Breast epithelium (tissue), 4 donors: ENCODE measurements at regions of chr2 and their contacts with region 1.

Region 1: DNA sequence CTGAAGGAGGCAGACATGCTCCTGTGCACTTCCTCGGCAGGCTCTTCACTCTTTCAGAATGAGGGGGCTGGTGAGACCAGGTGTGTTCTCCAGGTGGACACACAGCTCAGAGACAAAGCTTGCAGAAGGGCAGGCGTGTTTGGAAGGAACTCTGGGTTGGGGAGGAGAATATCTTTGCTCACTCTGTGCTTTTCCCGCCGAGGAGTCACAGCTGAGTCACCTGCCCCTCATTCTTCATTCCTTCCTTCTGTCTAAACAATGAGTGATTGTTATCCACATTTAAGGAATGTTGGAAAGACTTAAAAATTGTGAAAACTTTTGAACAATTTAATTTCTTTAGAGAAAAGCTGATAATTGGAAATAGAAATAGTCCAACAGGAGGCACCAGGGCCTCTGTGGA is 126.3 kb upstream of the TPO start:
- DNase-seq: no peak
- H3K4me3 ChIP-seq: no peak overlapping the region
- H3K27ac ChIP-seq: no peak overlapping the region
- H3K4me1 ChIP-seq: no peaks in the 10 kb centered on the region
- H3K27me3 ChIP-seq: no peaks in the 10 kb centered on the region
- CTCF ChIP-seq: no peak
- POLR2A ChIP-seq: no peak

Region 2: GRCh38 chr2:1192121-1192520 is 94.8 kb before region 1 on chr2:
- intact Hi-C with region 1: no loop called
- DNase-seq: no peak
- H3K4me3 ChIP-seq: no peak overlapping the region
- H3K27ac ChIP-seq: no peak overlapping the region
- H3K4me1 ChIP-seq: no peaks in the 10 kb centered on the region
- H3K27me3 ChIP-seq: no peaks in the 10 kb centered on the region
- CTCF ChIP-seq: no peak
- POLR2A ChIP-seq: no peak

Region 3: GRCh38 chr2:1272835-1273234 is 14.1 kb before region 1 on chr2:
- intact Hi-C with region 1: no loop called
- DNase-seq: no peak
- H3K4me3 ChIP-seq: no peak overlapping the region
- H3K27ac ChIP-seq: no peak overlapping the region
- H3K4me1 ChIP-seq: no peaks in the 10 kb centered on the region
- H3K27me3 ChIP-seq: peaks cover 0 to 7% of the 10 kb centered on the region in 2 donors
- CTCF ChIP-seq: no peak
- POLR2A ChIP-seq: no peak

Region 4: DNA sequence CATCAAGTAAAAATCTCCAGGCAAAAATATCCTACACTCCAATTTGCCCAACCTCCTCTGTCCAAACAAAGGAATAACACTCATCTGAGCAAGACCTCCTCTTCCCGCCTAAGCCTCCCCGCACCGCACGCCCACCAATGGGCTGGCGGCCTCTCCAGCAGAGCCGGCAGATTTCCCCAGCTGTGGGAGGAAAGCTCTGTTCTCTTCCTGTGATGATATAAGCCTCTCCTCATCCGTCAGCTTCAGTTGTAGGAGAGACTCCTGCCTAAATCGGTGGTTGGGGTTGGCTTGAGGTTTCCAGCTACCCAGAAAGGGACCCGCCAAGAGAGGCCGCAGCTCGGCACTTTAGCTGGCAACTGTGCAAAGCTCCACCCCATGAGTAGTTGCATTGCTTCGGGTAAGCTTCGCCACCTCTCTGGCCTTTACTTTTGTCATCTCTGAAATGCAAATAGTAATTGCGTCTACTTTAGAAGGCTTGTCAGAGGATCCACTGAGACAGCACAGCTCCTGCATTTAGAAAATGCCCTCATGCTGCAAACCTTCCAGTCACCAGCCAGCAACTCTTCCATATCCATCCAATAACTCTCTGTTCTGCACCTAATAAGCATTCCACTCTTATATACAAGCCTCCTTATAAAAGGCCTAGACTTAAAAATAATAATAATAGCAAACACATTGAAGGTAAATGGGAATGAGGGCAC is 897.8 kb after region 1 on chr2:
- intact Hi-C with region 1: loop called (anchors 5 kb)
- DNase-seq: no peak
- H3K4me3 ChIP-seq: no peak overlapping the region
- H3K27ac ChIP-seq: no peak overlapping the region
- H3K4me1 ChIP-seq: no peaks in the 10 kb centered on the region
- H3K27me3 ChIP-seq: no peaks in the 10 kb centered on the region
- CTCF ChIP-seq: no peak
- POLR2A ChIP-seq: no peak